H1 (cell line): ENCODE measurements at regions of chr13 and their contacts with region 1.

Region 1: GRCh38 chr13:40069173-40070044 is 413.9 kb downstream of the COG6 start:
- DNase-seq: peak in 1 of 2 experiments; percentile 84
- H3K4me3 ChIP-seq: no peak overlapping the region
- H3K27ac ChIP-seq: no peak overlapping the region
- H3K4me1 ChIP-seq: peaks cover 0 to 4% (median 2%) of the 10 kb centered on the region in 4 experiments; a peak in 4 of 7 replicates
- H3K27me3 ChIP-seq: no peaks in the 10 kb centered on the region
- CTCF ChIP-seq: peak; percentile 71 to 90 (median 83)
- EP300 ChIP-seq: no peak
- POLR2A ChIP-seq: no peak
- RAD21 ChIP-seq: peak; percentile 84 to 87

Region 2: GRCh38 chr13:40026174-40026585 is 43.2 kb before region 1 on chr13:
- CTCF ChIA-PET with region 1: interaction called, 11 read pairs
- POLR2A ChIA-PET with region 1: no interaction called
- DNase-seq: no peak
- H3K4me3 ChIP-seq: no peak overlapping the region
- H3K27ac ChIP-seq: no peak overlapping the region
- H3K4me1 ChIP-seq: peaks cover 0 to 4% (median 0%) of the 10 kb centered on the region in 4 experiments; a peak in 1 of 7 replicates
- H3K27me3 ChIP-seq: no peaks in the 10 kb centered on the region
- CTCF ChIP-seq: no peak
- EP300 ChIP-seq: no peak
- POLR2A ChIP-seq: no peak
- RAD21 ChIP-seq: no peak

Region 3: DNA sequence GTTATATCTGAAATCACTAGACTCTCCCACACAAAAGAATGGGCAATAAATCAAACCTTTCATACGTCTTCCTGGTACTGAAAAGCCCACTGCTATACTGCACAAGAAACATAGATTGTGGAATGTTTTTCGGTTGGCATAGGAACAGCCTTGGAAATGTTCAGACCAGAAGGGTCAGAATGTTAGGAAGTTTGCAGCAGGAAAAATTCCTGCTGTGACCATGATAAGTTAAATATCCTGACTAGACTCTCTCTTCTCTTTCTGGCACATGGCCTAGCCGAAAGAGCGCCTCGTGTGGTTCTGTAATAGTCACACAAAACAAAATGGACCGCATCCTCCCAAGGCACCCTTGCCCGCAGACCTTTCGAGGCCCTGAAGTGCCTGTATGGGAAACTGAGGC is 13.2 kb after region 1 on chr13:
- CTCF ChIA-PET with region 1: interaction called, 27 read pairs
- POLR2A ChIA-PET with region 1: no interaction called
- DNase-seq: no peak
- H3K4me3 ChIP-seq: no peak overlapping the region
- H3K27ac ChIP-seq: no peak overlapping the region
- H3K4me1 ChIP-seq: peaks cover 0 to 10% (median 4%) of the 10 kb centered on the region in 4 experiments; a peak in 5 of 7 replicates
- H3K27me3 ChIP-seq: no peaks in the 10 kb centered on the region
- CTCF ChIP-seq: peak in 1 of 3 experiments; percentile 17; a peak in 1 of 4 replicates
- EP300 ChIP-seq: no peak
- POLR2A ChIP-seq: no peak
- RAD21 ChIP-seq: 0 out of 4 replicates have a peak, but pooled peaks of 1 of the 2 experiments have one; percentile 1

Region 4: DNA sequence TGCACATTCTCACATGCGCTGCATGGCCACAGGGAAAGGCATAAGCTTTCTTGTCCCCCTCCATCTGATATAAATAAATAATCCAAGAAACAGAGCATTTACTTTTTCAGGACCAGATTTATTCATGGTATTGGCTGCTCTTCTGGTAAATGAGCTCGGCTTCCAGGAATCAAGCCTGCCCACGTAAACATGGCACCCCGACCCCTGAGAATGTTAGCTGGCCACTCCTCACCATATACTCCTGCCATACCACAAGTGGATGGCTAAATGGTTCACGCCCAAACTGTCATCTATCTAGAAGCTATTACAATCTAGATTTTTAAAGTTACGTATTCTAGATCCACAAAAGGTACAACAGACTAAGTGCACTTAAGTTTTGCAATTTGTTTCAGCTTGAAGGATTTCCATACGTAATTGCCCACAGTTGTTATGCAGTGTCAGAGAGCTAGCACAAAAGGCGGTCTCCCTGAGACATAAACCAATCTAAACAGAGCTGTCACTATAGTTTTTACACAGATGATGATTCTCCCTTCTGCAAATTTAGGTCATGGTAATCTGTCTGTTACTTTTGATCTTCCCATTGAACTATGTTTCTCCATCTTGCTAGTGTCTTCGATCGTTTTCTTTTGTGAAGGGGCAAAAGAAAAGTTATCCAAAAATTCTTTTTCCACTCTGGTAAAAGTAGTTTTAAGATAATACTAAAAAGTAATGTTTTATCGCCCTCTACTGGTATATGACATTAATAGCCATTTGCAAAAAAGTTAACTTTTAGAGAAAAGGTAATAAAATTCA is 613.2 kb after region 1 on chr13:
- CTCF ChIA-PET with region 1: interaction called, 18 read pairs
- POLR2A ChIA-PET with region 1: no interaction called
- DNase-seq: no peak
- H3K4me3 ChIP-seq: no peak overlapping the region
- H3K27ac ChIP-seq: no peak overlapping the region
- H3K4me1 ChIP-seq: peaks cover 12 to 15% (median 14%) of the 10 kb centered on the region in 4 experiments
- H3K27me3 ChIP-seq: no peaks in the 10 kb centered on the region
- CTCF ChIP-seq: peak in 1 of 3 experiments; percentile 28; a peak in 1 of 4 replicates
- EP300 ChIP-seq: no peak
- POLR2A ChIP-seq: no peak
- RAD21 ChIP-seq: peak in 1 of 2 experiments; percentile 47; a peak in 3 of 4 replicates